Posterior cingulate gyrus (tissue), 11 donors: ENCODE measurements at regions of chr3 and their contacts with region 1.

Region 1: DNA sequence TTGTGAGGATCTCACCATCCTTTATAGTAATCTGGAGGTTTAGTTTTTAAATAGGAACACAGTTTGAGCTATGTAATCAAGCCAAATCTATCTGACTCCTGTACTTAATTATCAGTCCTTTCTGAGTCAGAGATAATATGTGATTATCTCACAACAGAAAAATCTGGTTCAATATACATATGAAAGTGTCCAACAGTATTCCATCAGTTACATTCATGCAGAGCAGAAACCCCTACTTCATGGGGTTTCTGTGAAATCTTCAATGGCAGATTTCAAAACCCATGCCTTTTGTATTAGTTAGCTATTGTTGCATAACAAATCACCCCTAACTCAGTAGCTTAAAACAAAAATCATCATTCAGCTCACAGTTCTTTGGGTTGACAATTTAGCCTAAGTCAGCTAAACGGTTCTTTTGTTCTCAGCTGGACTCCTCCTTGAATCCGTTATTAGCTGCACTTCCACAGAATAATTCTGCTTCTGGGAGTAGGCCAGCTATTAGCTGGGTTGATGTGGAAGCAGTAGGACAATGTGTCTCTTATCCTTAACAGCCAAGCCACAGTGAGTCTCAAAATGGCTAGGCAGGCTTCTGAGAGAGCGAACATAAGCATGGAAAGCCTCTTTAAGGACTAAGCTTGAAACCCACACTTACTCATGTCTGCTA is 42.9 kb upstream of the ARPP21 start:
- DNase-seq: peak in 3 of 10 donors; percentile 2 to 29 (median 24)

Region 2: DNA sequence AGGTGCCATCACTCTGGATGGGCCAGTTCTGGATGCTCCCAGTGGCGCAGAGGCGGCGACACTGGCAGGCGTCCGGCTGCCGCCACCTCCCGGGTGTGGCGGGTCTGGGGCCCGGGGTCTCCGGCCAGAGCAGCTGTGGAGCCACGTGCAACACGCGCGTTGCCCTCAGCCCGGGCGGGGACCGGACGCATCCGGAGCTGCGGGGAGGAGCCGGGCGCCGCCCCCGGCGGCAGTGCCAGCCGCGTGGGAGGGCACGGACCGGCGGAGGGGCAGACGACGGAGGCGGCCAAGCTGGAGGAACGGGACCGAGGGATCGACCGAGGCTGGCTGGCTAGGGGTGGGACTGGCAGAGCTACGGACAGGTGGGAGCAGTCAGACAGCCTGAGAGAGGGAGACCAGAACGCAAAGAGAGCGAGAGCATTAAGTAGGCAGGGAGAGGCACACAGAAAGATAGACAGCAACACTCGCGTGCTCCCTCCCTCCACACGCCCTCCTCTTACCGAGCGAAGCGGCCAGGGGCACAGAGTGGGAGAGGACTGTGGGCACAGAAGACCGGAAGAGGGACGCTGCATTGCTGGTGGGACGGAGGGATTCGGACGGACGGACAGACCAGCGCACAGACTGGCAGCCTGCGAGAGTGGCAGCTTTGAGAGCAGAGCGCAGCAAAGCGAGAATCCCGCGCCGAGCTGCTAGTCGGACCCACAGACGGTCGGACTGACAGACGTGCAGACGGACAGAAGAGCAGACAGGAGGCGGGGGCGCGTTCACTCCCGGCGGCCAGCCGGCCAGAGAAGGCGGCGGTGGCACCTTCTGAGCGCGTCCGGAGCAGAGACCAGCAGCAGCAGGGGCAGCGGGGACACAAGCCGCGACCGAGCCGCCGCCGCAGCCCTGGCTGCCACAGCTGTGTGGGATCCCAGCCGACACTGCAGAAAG is 43.1 kb after region 1 on chr3 and contains the start of gene ARPP21:
- intact Hi-C with region 1: loop called (anchors 5 kb)
- DNase-seq: peak; percentile 49 to 96 (median 66)

Region 3: DNA sequence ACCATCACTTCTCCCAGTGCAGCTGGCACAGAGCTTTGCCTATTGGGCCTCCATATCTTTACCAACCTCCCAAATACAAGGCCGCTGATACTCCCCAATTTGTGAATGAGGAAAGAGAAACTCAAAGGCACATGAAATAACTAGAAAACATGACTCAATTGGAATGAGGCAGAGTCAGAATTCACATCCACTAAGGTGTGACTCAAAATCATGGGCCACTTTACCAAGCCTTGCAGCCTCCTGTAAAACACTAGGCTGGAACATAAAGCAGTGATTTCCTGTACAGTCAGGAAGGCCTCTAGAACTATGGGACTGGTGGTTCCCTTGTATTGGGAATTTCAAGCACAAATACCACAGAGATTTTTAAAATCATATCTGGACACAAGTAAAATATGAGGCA is 1039.3 kb after region 1 on chr3:
- intact Hi-C with region 1: no loop called
- DNase-seq: no peak